Sciatic nerve (tissue), 2 donors: ENCODE measurements at regions of chr2 and their contacts with region 1.

Region 1: DNA sequence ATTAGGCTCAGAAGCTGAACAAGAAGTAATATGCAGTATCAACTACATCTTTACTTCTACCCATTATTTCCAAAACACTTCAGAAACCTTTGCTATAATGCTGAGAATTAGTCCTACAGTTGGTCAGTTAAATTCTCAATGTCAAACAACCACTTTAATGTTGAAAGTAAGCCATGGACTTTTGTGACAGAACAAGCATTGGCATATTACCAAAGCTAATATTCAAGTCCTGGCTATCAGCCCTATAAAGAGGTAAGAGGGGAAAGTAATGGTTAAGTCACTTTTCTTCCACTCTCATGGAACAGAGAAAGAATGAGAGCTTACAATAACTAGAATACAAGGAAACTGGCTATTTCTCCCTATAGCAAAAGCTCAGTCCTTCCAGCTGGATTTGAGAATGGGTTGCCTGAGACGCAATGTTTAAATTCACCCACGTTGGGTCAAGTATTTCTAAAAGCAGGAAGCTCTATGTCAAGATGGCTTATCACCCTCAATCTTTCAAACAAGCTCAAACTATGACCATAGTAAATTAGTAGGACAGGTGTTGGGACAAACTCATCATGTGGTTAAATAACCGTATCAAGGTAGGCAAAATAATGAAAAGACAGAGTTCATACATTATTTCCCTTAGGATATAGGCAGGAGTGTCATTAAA is 31.4 kb upstream of the MFSD6 start:
- DNase-seq: no peak
- ATAC-seq: no peak

Region 2: GRCh38 chr2:190355980-190356644 is 20.6 kb before region 1 on chr2:
- intact Hi-C with region 1: loop called (anchors 1 kb)
- DNase-seq: no peak
- ATAC-seq: peak; percentile 40